ENCODE measurements at regions of chr2 and their contacts with region 1.

Region 1: GRCh38 chr2:45729753-45730512 is 78.5 kb downstream of the PRKCE start:
- DNase-seq: no peak
- H3K4me3 ChIP-seq: no peak overlapping the region
- H3K27ac ChIP-seq: no peak overlapping the region
- H3K4me1 ChIP-seq: no peaks in the 10 kb centered on the region; a peak in 1 of 7 replicates
- H3K27me3 ChIP-seq: no peaks in the 10 kb centered on the region
- CTCF ChIP-seq: peak; percentile 18 to 61 (median 44)
- EP300 ChIP-seq: no peak
- POLR2A ChIP-seq: no peak
- RAD21 ChIP-seq: peak; percentile 33 to 44; a peak in 3 of 4 replicates

Region 2: DNA sequence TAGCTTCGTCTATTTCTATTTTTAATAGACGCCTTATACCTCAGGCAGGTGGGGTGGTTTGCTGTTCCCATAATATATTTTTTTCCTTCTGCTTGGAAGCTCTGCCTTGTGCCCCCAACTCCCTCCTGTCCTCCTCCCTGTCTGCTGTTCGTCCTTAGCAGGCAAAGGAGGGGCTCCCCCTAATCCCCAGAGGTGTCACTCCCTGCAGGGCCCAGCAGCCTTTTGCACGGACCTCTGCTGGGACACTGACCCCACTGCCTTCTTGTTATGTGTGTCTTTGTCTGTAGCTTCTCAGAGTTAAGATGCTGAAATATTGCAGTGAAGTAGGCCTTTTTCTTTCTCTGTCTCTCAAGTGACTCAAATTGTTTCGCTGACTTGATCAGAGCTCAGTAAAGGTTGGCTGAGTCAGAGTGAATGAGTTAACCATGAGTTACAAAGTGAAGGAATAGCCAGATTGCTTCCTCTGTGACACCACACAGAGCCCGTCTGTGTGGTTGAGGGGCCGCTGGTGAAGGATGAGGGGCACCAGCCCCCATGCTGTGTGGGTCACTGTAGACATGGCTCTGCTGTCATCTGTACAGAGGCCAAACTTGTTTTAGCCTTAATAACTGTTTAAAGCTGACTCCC is 30.8 kb before region 1 on chr2:
- CTCF ChIA-PET with region 1: interaction called, 10 read pairs
- POLR2A ChIA-PET with region 1: no interaction called
- DNase-seq: no peak
- H3K4me3 ChIP-seq: no peak overlapping the region
- H3K27ac ChIP-seq: no peak overlapping the region
- H3K4me1 ChIP-seq: no peaks in the 10 kb centered on the region
- H3K27me3 ChIP-seq: no peaks in the 10 kb centered on the region
- CTCF ChIP-seq: no peak
- EP300 ChIP-seq: no peak
- POLR2A ChIP-seq: no peak
- RAD21 ChIP-seq: no peak

Region 3: DNA sequence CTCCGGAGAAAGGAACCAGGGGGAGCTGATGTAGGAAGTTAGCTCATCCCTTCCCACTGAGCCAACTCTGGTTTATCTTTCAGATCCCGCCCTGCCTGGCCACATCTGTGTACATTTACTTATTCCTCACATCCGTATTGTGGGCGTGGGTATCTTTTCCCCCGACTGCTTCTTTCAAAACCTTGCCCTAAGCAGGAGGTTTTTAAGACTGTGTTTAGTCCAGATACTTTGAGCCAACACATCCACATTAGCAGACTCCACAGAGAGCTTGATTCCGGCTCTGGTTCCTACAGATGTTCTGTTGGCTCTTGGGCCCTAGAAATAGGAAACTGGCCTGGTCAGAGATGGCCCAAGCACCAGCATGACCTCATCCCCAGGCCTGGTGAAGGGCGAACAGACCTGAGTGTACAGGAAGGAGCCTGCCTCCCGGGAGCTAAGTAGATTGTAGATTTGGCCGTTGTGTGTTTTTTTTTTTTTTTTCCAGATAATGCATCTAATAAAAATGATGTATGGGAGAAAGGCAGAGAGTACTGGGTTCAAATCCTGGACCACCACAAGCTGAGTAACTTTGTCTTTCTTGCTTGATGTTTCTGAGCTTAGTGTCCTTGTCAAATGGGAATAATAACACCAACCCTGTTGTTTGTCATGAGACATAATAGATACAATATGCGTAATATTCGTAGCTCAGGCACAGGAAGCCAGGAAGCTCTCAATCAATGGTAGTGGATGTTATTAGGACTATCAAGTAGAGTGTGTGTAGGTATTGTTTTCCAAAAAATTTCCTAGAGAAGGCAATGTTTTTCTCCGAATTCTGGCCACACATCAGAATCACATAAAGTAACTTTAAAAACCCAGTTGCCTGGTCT is 13.8 kb after region 1 on chr2:
- CTCF ChIA-PET with region 1: interaction called, 28 read pairs
- POLR2A ChIA-PET with region 1: interaction called, 3 read pairs
- DNase-seq: no peak
- H3K4me3 ChIP-seq: no peak overlapping the region
- H3K27ac ChIP-seq: no peak overlapping the region
- H3K4me1 ChIP-seq: no peaks in the 10 kb centered on the region; a peak in 1 of 7 replicates
- H3K27me3 ChIP-seq: no peaks in the 10 kb centered on the region
- CTCF ChIP-seq: no peak
- EP300 ChIP-seq: no peak
- POLR2A ChIP-seq: no peak
- RAD21 ChIP-seq: no peak